ENCODE measurements at regions of chr16 and their contacts with region 1.

Region 1: GRCh38 chr16:3187798-3188674 is at the start of gene OR1F1:
- DNase-seq: peak; percentile 87
- H3K4me3 Mint-ChIP-seq: peak within 1 kb of the TSS; percentile 70
- H3K27ac Mint-ChIP-seq: peak within 1 kb of the TSS; percentile 79
- H3K4me1 Mint-ChIP-seq: peaks cover 38% of the 10 kb centered on the region
- H3K27me3 Mint-ChIP-seq: peaks cover 58% of the 10 kb centered on the region
- total RNA-seq, gene OR1F1: not detected in 2 replicates

Region 2: GRCh38 chr16:3143612-3144320 is 44.3 kb before region 1 on chr16:
- intact Hi-C with region 1: no loop called
- DNase-seq: no peak
- H3K4me3 Mint-ChIP-seq: no peak overlapping the region
- H3K27ac Mint-ChIP-seq: no peak overlapping the region
- H3K4me1 Mint-ChIP-seq: no peaks in the 10 kb centered on the region
- H3K27me3 Mint-ChIP-seq: no peaks in the 10 kb centered on the region

Region 3: GRCh38 chr16:3305109-3306068 is 117.4 kb after region 1 on chr16 and contains the starts of genes TIGD7 and ZNF75A:
- intact Hi-C with region 1: loop called (anchors 10 kb)
- DNase-seq: peak; percentile 94
- H3K4me3 Mint-ChIP-seq: peak within 1 kb of the TSS; percentile 80
- H3K27ac Mint-ChIP-seq: peak within 1 kb of the TSS; percentile 79
- H3K4me1 Mint-ChIP-seq: peaks cover 7% of the 10 kb centered on the region
- H3K27me3 Mint-ChIP-seq: no peaks in the 10 kb centered on the region
- total RNA-seq, gene TIGD7: 2.3 and 3.2 TPM in 2 replicates
- total RNA-seq, gene ZNF75A: 26.5 and 33.5 TPM in 2 replicates

Measured in activated CD4-positive, alpha-beta T cell treated with anti-CD3 and anti-CD28 coated beads, Interleukin-2, amount 10 ng/mL, durations not matched to agents 24 days and 14 days (primary cell).